ENCODE measurements at regions of chr20 and their contacts with region 1.

Region 1: GRCh38 chr20:49768204-49769047 is 44.2 kb upstream of the SLC9A8 start:
- DNase-seq: peak in 7 of 9 donors; percentile 18 to 73 (median 68)
- ATAC-seq: peak; percentile 74
- H3K4me3 ChIP-seq: peak overlapping the region; percentile 9
- H3K4me3 Mint-ChIP-seq: peak overlapping the region; percentile 46 to 80 (median 70)
- H3K27ac ChIP-seq: no peak overlapping the region
- H3K27ac Mint-ChIP-seq: peak overlapping the region in 4 of 9 donors; percentile 19 to 72 (median 58)
- H3K4me1 ChIP-seq: peaks cover 13 to 20% of the 10 kb centered on the region in 2 donors
- H3K4me1 Mint-ChIP-seq: peaks cover 19 to 45% (median 25%) of the 10 kb centered on the region in 7 donors
- H3K27me3 ChIP-seq: peaks cover 0 to 14% of the 10 kb centered on the region in 2 donors
- H3K27me3 Mint-ChIP-seq: peaks cover 43 to 75% (median 63%) of the 10 kb centered on the region in 5 donors

Region 2: DNA sequence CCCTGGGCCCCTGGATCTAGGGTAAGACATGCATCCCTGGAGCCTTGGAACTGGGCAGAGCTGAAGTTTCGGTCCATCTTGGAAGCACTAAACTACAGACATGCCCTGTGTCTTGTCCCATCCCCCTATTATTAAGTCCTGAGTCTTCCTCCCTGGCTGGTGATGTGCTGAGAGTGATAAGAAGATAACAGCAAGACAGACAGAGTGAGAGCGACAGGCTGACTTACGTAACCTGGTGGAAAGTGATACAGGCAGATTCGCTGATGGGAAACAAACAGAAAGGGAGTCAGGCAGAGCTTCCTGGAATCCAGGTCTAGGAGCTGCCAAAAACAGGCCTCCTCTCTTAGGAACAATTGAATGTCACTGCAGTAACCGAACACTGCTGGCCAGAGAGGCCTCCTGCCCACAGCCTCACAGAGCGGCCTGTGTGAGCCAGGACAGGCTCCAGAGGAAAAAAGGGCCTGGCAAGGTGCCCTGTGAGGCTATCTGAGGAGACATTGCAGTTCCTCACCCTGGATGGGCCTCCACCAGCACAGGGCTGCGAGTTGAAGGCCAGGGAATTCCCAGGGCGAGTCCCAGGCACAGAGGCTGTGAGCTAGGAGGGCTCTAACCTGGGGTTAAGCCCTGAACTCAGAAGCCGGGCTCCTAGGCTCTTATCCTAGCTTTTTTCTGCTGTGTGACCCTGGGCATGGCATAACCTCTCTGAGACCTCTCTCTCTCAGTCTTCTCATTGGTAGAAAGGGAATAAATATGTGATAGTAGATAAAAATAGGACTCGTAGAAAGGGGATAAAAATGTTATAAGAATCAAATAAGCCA is 20.5 kb before region 1 on chr20:
- CTCF ChIA-PET with region 1: no interaction called
- POLR2A ChIA-PET with region 1: no interaction called
- intact Hi-C with region 1: no loop called
- DNase-seq: no peak
- ATAC-seq: no peak
- H3K4me3 ChIP-seq: no peak overlapping the region
- H3K4me3 Mint-ChIP-seq: no peak overlapping the region
- H3K27ac ChIP-seq: no peak overlapping the region
- H3K27ac Mint-ChIP-seq: no peak overlapping the region
- H3K4me1 ChIP-seq: no peaks in the 10 kb centered on the region
- H3K4me1 Mint-ChIP-seq: peaks cover 0 to 10% (median 8%) of the 10 kb centered on the region in 7 donors
- H3K27me3 ChIP-seq: no peaks in the 10 kb centered on the region
- H3K27me3 Mint-ChIP-seq: peaks cover 5 to 41% (median 17%) of the 10 kb centered on the region in 5 donors

Region 3: DNA sequence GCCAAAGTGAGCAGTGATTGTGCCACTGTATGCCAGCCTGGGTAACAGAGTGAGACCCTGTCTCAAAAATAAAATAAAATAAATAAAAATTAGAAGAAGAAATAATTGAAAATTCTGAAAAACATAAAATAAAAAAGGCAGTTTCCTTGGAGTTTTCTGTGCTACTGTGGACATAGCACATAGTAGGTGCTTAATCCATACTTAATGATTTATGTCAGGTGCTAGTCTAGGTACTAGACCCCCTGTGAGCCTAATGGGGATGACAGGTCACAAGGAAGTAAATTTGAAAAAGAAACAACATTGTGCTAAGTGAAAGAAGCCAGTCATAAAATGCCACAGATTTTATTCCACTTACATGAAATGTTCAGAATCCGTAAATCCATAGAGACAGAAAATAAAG is 35.0 kb after region 1 on chr20:
- CTCF ChIA-PET with region 1: interaction called, 3 read pairs
- POLR2A ChIA-PET with region 1: no interaction called
- intact Hi-C with region 1: loop called in 1 of 2 experiments (anchors 2 kb)
- DNase-seq: no peak
- ATAC-seq: no peak
- H3K4me3 ChIP-seq: no peak overlapping the region
- H3K4me3 Mint-ChIP-seq: no peak overlapping the region
- H3K27ac ChIP-seq: no peak overlapping the region
- H3K27ac Mint-ChIP-seq: peak overlapping the region in 1 of 9 donors; percentile 21
- H3K4me1 ChIP-seq: peaks cover 6% of the 10 kb centered on the region in 2 donors
- H3K4me1 Mint-ChIP-seq: peaks cover 6 to 60% (median 14%) of the 10 kb centered on the region in 7 donors
- H3K27me3 ChIP-seq: no peaks in the 10 kb centered on the region
- H3K27me3 Mint-ChIP-seq: peaks cover 0 to 11% (median 3%) of the 10 kb centered on the region in 5 donors

Region 4: DNA sequence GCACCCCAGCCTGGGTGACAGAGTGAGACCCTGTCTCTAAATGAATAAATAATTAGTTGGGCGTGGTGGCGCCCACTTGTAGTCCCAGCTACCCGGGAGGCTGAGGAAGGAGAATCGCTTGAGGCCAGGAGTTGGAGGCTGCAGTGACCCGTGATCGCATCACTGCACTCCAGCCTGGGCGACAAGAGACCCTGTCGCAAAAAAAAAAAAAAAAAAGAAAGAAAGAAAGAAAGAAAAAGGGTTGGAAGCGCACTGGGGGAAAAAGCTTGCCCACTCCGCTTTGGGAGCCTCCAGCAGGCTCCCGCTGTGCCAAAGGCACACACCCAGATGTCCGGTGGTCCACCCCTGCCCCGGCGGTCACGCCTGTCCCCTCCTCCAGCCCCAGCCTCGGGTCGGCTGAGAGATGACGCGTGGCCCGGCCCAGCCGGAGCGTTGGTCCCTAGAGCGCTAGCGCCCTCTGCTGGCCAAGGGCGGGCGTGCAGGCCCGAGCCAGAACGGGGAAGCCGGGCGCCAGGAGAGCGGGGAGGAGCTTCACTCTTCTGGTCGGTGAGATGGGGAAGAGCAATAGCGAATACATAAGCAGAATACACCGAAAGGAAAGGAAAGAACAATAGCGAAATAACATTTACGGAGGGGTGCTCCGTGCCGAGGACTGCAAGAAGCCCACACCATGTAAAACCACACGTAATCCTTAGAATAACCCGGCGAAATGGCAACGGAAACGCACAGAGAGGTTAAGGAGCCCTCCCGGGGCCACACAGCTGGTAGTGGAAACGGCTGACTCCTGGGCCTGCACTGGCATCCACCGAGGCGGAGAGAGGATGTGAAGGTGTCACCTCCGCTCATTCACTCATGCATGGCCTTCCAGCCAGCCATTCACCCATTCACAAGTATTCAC is 302.8 kb after region 1 on chr20:
- CTCF ChIA-PET with region 1: no interaction called
- POLR2A ChIA-PET with region 1: no interaction called
- intact Hi-C with region 1: no loop called
- DNase-seq: peak; percentile 75 to 99 (median 88)
- ATAC-seq: peak; percentile 100
- H3K4me3 ChIP-seq: peak overlapping the region; percentile 51
- H3K4me3 Mint-ChIP-seq: peak overlapping the region; percentile 59 to 87 (median 72)
- H3K27ac ChIP-seq: no peak overlapping the region
- H3K27ac Mint-ChIP-seq: peak overlapping the region in 1 of 9 donors; percentile 18
- H3K4me1 ChIP-seq: peaks cover 0 to 4% of the 10 kb centered on the region in 2 donors
- H3K4me1 Mint-ChIP-seq: peaks cover 0 to 5% (median 5%) of the 10 kb centered on the region in 7 donors
- H3K27me3 ChIP-seq: no peaks in the 10 kb centered on the region
- H3K27me3 Mint-ChIP-seq: peaks cover 0 to 5% (median 4%) of the 10 kb centered on the region in 5 donors

Measured in naive thymus-derived CD4-positive, alpha-beta T cell (primary cell).